Testis (tissue), 5 donors: ENCODE measurements at regions of chr9 and their contacts with region 1.

Region 1: DNA sequence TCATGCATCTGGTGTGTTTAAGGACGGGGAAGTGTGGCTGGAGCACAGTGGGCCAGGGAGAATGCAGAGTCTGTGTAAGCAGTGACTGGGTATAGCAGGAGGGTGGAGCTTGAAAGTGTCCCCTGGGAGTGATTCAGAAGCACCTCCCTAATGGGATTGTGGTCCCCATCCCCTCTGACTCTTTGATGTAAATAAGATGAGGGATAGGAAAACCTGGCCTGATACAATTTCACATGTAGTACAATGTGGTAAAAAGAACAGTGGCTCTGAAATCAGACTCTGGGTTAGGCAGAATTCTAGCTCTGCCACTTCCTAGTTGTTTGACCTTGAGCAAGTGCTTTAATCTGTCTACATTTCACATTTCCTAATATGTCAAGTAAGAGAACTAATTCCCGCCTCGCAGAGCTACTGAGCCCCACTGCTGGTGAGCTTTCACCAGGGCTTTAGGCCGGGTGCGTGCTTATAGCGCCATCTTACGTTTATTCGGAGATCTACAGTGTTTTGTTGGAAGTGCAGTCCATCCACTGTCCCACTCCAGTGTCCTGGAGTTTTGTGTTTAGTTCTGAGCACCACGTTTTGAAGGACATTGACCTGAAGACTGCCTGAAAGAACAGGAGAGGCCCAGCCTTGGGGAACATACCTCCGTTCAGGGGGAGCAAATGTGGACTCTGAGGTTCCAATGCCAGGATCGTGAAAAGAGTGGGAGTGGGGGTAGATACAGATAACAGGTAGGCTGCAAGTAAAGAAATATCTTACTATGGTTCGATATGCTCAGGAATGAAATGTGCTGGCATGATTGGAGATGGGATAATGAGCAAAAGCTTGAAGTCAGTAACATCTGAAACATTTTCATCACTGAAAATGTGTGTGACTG is 51.2 kb upstream of the TESK1 start:
- DNase-seq: peak; percentile 79
- H3K4me3 ChIP-seq: no peak overlapping the region
- H3K27ac ChIP-seq: peak overlapping the region in 1 of 2 donors; percentile 57
- H3K4me1 ChIP-seq: peaks cover 21% of the 10 kb centered on the region
- H3K27me3 ChIP-seq: no peaks in the 10 kb centered on the region
- CTCF ChIP-seq: peak; percentile 74 to 83 (median 79)
- POLR2A ChIP-seq: no peak

Region 2: GRCh38 chr9:35489313-35490154 is 64.4 kb before region 1 on chr9 and contains the start of gene RUSC2:
- intact Hi-C with region 1: loop called (anchors 5 kb)
- DNase-seq: peak; percentile 87
- H3K4me3 ChIP-seq: peak within 1 kb of the TSS; percentile 78 to 87
- H3K27ac ChIP-seq: peak within 1 kb of the TSS; percentile 90 to 96
- H3K4me1 ChIP-seq: peaks cover 14% of the 10 kb centered on the region
- H3K27me3 ChIP-seq: no peaks in the 10 kb centered on the region
- CTCF ChIP-seq: peak in 2 of 3 experiments; percentile 33 to 37
- POLR2A ChIP-seq: peak; percentile 17
- total RNA-seq, gene RUSC2: 28.7 to 32.3 TPM